ENCODE measurements at regions of chr2 and their contacts with region 1.

Region 1: GRCh38 chr2:227238238-227239237 is 74.1 kb downstream of the COL4A3 start:
- DNase-seq: peak; percentile 49
- ATAC-seq: peak; percentile 79
- H3K4me3 ChIP-seq: no peak overlapping the region
- H3K27ac ChIP-seq: no peak overlapping the region
- H3K4me1 ChIP-seq: no peaks in the 10 kb centered on the region
- H3K27me3 ChIP-seq: 0 out of 5 replicates have a peak, but pooled peaks cover 0 to 1% of the 10 kb centered on the region in 2 experiments
- CTCF ChIP-seq: peak; percentile 82
- EP300 ChIP-seq: no peak
- POLR2A ChIP-seq: no peak
- RAD21 ChIP-seq: 0 out of 2 replicates have a peak, but pooled peaks have one; percentile 44

Region 2: GRCh38 chr2:225668606-225669266 is 1569.8 kb before region 1 on chr2:
- CTCF ChIA-PET with region 1: interaction called, 3 read pairs
- POLR2A ChIA-PET with region 1: no interaction called
- in situ Hi-C with region 1: no loop called
- intact Hi-C with region 1: loop called (anchors 5 kb)
- DNase-seq: peak; percentile 65
- ATAC-seq: peak; percentile 95
- H3K4me3 ChIP-seq: no peak overlapping the region
- H3K27ac ChIP-seq: no peak overlapping the region
- H3K4me1 ChIP-seq: no peaks in the 10 kb centered on the region
- H3K27me3 ChIP-seq: no peaks in the 10 kb centered on the region
- CTCF ChIP-seq: peak; percentile 85
- EP300 ChIP-seq: no peak
- POLR2A ChIP-seq: no peak
- RAD21 ChIP-seq: 0 out of 2 replicates have a peak, but pooled peaks have one; percentile 31

Region 3: DNA sequence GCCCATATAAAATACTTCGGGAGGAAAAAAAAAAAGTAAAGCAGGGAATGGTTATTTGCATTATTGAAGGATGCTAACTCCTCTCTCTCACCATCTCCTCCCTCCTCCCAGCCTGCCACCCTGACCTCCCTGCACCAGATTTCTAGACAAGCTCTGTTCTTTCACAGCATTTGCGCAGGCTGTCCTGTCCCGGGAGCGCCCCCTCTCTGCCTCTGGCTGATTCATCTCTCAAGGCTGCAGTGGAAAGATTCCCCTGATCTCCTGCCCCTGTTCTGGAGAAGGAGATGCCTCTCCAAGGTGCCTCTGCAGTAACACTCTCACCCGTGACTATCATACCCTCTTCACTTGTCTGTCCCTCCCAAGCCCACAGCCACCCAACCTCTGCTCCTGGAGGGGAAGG is 113.0 kb before region 1 on chr2:
- CTCF ChIA-PET with region 1: interaction called, 46 read pairs
- POLR2A ChIA-PET with region 1: no interaction called
- in situ Hi-C with region 1: loop called (anchors 5 kb)
- intact Hi-C with region 1: loop called (anchors 1 kb)
- DNase-seq: peak; percentile 25
- ATAC-seq: peak; percentile 85
- H3K4me3 ChIP-seq: no peak overlapping the region
- H3K27ac ChIP-seq: no peak overlapping the region
- H3K4me1 ChIP-seq: no peaks in the 10 kb centered on the region
- H3K27me3 ChIP-seq: peaks cover 0 to 11% of the 10 kb centered on the region in 2 experiments; a peak in 2 of 5 replicates
- CTCF ChIP-seq: peak; percentile 63
- EP300 ChIP-seq: no peak
- POLR2A ChIP-seq: no peak
- RAD21 ChIP-seq: no peak

Region 4: GRCh38 chr2:227132986-227133385 is 105.6 kb before region 1 on chr2:
- CTCF ChIA-PET with region 1: interaction called, 46 read pairs
- POLR2A ChIA-PET with region 1: no interaction called
- in situ Hi-C with region 1: loop called (anchors 5 kb)
- intact Hi-C with region 1: loop called (anchors 1 kb)
- DNase-seq: no peak
- ATAC-seq: no peak
- H3K4me3 ChIP-seq: no peak overlapping the region
- H3K27ac ChIP-seq: no peak overlapping the region
- H3K4me1 ChIP-seq: no peaks in the 10 kb centered on the region
- H3K27me3 ChIP-seq: peaks cover 2 to 54% of the 10 kb centered on the region in 2 experiments; a peak in 3 of 5 replicates
- CTCF ChIP-seq: no peak
- EP300 ChIP-seq: no peak
- POLR2A ChIP-seq: no peak
- RAD21 ChIP-seq: no peak

Region 5: GRCh38 chr2:227310751-227311100 is 72.2 kb after region 1 on chr2:
- CTCF ChIA-PET with region 1: no interaction called
- POLR2A ChIA-PET with region 1: no interaction called
- in situ Hi-C with region 1: no loop called
- intact Hi-C with region 1: loop called (anchors 5 kb)
- DNase-seq: peak; percentile 34
- ATAC-seq: no peak
- H3K4me3 ChIP-seq: no peak overlapping the region
- H3K27ac ChIP-seq: no peak overlapping the region
- H3K4me1 ChIP-seq: peaks cover 57% of the 10 kb centered on the region
- H3K27me3 ChIP-seq: no peaks in the 10 kb centered on the region
- CTCF ChIP-seq: no peak
- EP300 ChIP-seq: no peak
- POLR2A ChIP-seq: no peak
- RAD21 ChIP-seq: no peak

Region 6: GRCh38 chr2:227324995-227325838 is 86.7 kb after region 1 on chr2 and contains the start of gene MFF:
- CTCF ChIA-PET with region 1: no interaction called
- POLR2A ChIA-PET with region 1: no interaction called
- in situ Hi-C with region 1: no loop called
- intact Hi-C with region 1: loop called (anchors 2 kb)
- DNase-seq: peak; percentile 92
- ATAC-seq: peak; percentile 97
- H3K4me3 ChIP-seq: peak within 1 kb of the TSS; percentile 94 to 98 (median 96)
- H3K27ac ChIP-seq: peak within 1 kb of the TSS; percentile 87
- H3K4me1 ChIP-seq: peaks cover 37% of the 10 kb centered on the region
- H3K27me3 ChIP-seq: no peaks in the 10 kb centered on the region
- CTCF ChIP-seq: peak; percentile 56
- EP300 ChIP-seq: peak in 1 of 2 experiments; percentile 80
- POLR2A ChIP-seq: peak; percentile 77 to 86
- RAD21 ChIP-seq: peak; percentile 75
- total RNA-seq, gene MFF: 156 and 170 TPM in 2 replicates

Measured in HepG2 (cell line).